ENCODE measurements at regions of chr4 and their contacts with region 1.

Region 1: GRCh38 chr4:38319456-38320342 is 344.3 kb upstream of the KLF3 start:
- DNase-seq: peak; percentile 80
- H3K4me3 Mint-ChIP-seq: peak overlapping the region; percentile 68
- H3K27ac Mint-ChIP-seq: peak overlapping the region; percentile 75
- H3K4me1 Mint-ChIP-seq: peaks cover 21% of the 10 kb centered on the region
- H3K27me3 Mint-ChIP-seq: peaks cover 27% of the 10 kb centered on the region

Region 2: DNA sequence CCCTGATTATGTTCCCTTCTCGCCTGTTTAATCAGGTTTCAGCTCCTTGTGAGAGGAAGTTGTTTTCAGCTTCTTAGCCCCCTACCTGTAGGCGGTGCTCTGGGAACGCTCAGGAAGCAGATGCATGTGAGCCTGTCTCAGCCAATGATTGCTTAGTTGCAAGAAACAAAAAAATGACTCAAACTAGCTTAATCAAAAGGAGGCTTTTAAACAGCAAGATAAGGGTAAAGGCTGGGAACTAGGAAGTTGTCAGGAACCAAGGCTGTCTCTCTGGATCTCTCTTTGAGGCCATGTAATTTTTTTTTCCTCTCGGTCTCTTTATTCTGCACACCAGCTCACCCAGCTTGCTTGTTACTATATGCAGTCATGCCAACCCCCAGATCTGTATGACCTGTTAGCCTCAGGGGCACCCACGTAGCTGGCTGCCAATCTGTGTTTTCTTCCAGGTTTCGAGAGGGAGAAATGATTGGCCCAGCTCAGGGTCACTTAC is 250.4 kb before region 1 on chr4:
- intact Hi-C with region 1: loop called (anchors 5 kb)
- DNase-seq: peak; percentile 16
- H3K4me3 Mint-ChIP-seq: no peak overlapping the region
- H3K27ac Mint-ChIP-seq: no peak overlapping the region
- H3K4me1 Mint-ChIP-seq: peaks cover 15% of the 10 kb centered on the region
- H3K27me3 Mint-ChIP-seq: no peaks in the 10 kb centered on the region

Region 3: GRCh38 chr4:38179690-38180377 is 139.9 kb before region 1 on chr4:
- intact Hi-C with region 1: loop called (anchors 2 kb)
- DNase-seq: peak; percentile 59
- H3K4me3 Mint-ChIP-seq: no peak overlapping the region
- H3K27ac Mint-ChIP-seq: no peak overlapping the region
- H3K4me1 Mint-ChIP-seq: peaks cover 23% of the 10 kb centered on the region
- H3K27me3 Mint-ChIP-seq: peaks cover 25% of the 10 kb centered on the region

Region 4: GRCh38 chr4:38334810-38335537 is 15.3 kb after region 1 on chr4:
- intact Hi-C with region 1: loop called (anchors 2 kb)
- DNase-seq: no peak
- H3K4me3 Mint-ChIP-seq: no peak overlapping the region
- H3K27ac Mint-ChIP-seq: no peak overlapping the region
- H3K4me1 Mint-ChIP-seq: peaks cover 14% of the 10 kb centered on the region
- H3K27me3 Mint-ChIP-seq: peaks cover 42% of the 10 kb centered on the region

Region 5: DNA sequence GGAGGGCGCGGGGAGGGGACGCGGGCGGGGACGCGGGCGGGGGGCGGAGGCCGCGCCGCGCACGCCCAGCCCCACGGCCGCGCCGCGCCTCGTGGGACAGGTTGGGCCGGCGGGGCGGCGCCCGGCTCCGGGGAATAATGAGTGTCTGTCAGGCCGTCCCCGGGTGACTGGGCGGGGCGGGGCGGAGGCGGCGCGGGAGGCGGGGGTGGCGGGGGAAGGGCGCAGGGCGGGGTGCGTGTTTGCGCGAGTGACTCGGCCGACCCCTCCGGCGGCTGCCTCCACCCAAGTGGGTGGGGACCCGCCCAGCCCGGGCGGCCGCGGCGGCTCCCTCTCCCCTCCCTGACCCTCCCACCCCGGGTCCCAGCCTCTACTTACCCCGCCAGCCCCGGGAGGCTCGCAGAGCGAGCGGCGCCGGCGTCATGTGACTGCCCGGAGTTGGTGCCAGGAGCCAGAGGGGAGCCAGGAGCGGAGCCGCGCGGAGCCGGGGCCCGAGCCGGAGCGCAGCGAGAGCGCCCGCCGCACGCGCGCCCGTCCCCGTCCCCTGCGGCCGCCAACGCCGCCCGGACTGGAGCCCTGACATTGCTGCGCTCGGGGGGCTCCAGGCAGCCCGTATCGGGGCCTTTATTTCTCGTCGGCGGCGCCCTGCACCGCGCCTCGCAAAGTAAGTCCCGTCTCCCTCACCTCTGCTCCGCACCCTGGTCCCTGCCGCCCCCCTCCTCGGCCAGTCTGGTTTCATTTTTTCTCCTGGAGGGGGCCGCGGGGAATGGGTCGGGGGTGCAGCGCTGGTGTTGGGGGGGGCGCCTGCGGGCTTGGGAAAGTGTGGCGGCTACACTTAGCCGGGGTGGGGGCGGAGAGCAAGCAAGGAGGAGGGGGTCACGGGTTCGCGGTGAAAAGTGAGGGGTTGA is 344.4 kb after region 1 on chr4 and contains the start of gene KLF3:
- intact Hi-C with region 1: loop called (anchors 2 kb)
- DNase-seq: peak; percentile 78
- H3K4me3 Mint-ChIP-seq: peak within 1 kb of the TSS; percentile 75
- H3K27ac Mint-ChIP-seq: no peak within 1 kb of the TSS
- H3K4me1 Mint-ChIP-seq: peaks cover 23% of the 10 kb centered on the region
- H3K27me3 Mint-ChIP-seq: peaks cover 65% of the 10 kb centered on the region
- total RNA-seq, gene KLF3: 0.62 and 0.71 TPM in 2 replicates

Region 6: DNA sequence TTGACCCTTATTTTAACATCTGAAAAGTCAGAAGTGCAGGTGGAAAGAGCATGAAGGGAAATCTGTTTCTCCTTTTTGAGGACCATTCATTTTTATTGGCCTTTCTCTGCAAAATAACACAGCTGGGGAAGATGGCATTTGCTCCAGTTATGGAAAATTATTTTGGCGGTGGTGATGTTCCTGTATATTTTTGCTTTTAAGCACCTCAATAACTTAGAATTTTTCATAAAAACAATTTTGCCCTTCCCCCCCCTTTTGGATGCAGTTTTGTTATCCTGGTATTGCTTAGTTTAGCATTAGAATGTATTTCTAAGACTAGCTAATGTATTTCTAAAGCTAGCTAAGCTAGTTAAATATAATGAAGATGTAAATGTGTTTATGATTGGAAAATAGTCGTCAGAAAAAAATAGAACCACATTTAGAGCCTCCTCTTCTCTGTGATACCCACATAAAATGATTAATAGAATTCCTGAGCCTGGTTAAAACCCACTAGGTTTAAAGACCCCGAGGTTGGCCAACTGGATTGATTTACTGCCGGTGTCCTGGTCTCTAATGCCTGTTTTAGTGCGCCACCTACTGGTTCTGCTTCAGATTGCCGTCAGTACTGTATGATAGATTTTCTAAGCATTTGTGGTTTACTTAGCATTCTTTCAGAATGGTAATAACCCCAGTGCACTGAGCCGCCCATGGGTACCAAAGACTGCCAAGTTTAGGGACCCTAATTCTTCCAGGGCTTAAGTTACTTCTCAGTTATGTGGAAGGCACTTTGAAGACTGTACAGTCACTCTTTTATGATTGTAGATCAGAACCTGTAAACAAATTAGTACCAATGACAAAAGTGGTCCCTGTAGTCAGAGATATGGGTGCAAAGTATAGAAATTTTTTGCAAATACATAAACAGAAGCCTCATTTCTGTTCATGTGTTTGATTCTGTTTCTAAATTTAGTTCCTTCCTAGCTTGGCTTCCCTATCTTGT is 355.7 kb after region 1 on chr4:
- intact Hi-C with region 1: loop called (anchors 1 kb)
- DNase-seq: peak; percentile 68
- H3K4me3 Mint-ChIP-seq: no peak overlapping the region
- H3K27ac Mint-ChIP-seq: no peak overlapping the region
- H3K4me1 Mint-ChIP-seq: peaks cover 18% of the 10 kb centered on the region
- H3K27me3 Mint-ChIP-seq: peaks cover 30% of the 10 kb centered on the region

Region 7: DNA sequence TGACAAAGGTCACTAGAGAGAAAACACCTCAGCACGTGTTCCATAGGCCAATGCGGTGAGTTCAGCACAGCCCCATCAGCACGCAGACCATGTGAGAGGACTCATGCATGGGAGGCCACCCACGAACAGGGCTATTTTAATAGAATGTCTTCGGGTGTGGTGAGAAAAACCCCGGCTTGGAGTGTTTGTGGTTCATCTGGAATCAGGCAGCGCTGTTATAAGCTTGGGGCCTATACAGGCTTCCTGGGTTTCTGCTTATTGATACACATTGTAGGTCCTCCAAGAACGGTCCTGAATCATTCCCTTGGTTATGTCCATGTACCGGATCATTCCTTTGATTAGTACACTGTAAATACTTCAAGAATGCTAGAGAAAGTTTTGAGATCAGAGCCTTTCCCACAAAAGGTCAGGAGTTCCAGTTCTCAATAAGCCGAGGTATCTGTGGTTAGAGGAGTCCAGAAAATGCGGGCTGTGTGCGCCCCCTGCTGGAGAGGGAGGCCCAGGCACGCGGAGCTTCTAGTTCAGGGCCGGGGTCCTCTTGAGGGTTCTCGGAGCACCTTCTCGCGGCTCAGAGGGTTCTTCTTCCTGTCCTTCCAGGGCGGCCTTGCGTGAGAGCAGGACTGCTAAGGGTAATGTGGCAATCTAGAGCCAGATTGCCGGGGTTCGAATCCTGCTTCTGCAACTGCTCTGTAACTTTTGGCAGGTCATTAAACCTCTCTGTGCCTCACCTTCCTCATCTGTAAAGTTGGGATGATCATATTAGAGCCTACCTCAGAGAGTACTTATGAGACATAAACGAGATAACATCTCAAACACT is 411.3 kb after region 1 on chr4:
- intact Hi-C with region 1: loop called (anchors 1 kb)
- DNase-seq: peak; percentile 64
- H3K4me3 Mint-ChIP-seq: no peak overlapping the region
- H3K27ac Mint-ChIP-seq: no peak overlapping the region
- H3K4me1 Mint-ChIP-seq: peaks cover 10% of the 10 kb centered on the region
- H3K27me3 Mint-ChIP-seq: peaks cover 21% of the 10 kb centered on the region

Measured in activated T-helper 2 cell treated with anti-CD3 and anti-CD28 coated beads, Interferon-gamma antibody, Interleukin-2, Interleukin-4, amounts not matched to agents 10 μg/mL and 5 μg/mL and 100 μg/mL, durations not matched to agents 14 hours and 24 hours and 36 hours (primary cell).